ENCODE measurements at regions of chr17 and their contacts with region 1.

Region 1: DNA sequence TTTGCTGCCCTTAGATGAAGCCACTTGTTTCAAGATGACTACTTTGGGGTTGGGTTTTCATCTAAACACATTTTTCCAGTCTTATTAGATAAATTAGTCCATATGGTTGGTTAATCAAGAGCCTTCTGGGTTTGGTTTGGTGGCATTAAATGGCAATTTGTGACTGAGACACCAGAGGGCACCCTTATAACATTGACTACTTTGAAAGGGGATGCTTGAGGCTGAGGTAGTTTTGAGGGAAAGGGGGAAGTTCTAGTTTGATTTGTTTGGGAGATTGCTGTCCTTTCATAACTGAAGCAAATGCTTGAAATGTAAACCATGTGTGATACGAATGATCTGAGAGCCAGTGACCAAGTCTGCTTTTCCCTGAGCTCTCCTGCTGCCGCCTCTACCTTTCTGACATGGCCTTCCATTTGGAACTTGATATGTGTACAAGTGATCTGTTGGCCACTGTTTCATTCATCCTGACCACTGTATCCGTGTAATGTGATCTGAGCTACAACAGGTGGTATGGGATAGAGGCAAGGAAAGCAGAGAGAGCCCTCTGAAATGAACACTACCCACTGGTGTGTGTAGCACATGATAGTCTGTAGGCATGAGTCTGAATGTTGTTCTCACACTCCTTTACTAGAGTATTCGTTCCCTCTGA is 5.8 kb upstream of the RARA start:
- DNase-seq: peak; percentile 82 to 88 (median 83)
- H3K4me3 ChIP-seq: no peak overlapping the region
- H3K27ac ChIP-seq: no peak overlapping the region
- H3K4me1 ChIP-seq: peaks cover 16 to 39% (median 26%) of the 10 kb centered on the region in 4 experiments
- H3K27me3 ChIP-seq: no peaks in the 10 kb centered on the region

Region 2: GRCh38 chr17:40268141-40268712 is 34.9 kb before region 1 on chr17:
- CTCF ChIA-PET with region 1: no interaction called
- POLR2A ChIA-PET with region 1: no interaction called
- DNase-seq: no peak
- H3K4me3 ChIP-seq: no peak overlapping the region
- H3K27ac ChIP-seq: no peak overlapping the region
- H3K4me1 ChIP-seq: no peaks in the 10 kb centered on the region
- H3K27me3 ChIP-seq: no peaks in the 10 kb centered on the region

Region 3: DNA sequence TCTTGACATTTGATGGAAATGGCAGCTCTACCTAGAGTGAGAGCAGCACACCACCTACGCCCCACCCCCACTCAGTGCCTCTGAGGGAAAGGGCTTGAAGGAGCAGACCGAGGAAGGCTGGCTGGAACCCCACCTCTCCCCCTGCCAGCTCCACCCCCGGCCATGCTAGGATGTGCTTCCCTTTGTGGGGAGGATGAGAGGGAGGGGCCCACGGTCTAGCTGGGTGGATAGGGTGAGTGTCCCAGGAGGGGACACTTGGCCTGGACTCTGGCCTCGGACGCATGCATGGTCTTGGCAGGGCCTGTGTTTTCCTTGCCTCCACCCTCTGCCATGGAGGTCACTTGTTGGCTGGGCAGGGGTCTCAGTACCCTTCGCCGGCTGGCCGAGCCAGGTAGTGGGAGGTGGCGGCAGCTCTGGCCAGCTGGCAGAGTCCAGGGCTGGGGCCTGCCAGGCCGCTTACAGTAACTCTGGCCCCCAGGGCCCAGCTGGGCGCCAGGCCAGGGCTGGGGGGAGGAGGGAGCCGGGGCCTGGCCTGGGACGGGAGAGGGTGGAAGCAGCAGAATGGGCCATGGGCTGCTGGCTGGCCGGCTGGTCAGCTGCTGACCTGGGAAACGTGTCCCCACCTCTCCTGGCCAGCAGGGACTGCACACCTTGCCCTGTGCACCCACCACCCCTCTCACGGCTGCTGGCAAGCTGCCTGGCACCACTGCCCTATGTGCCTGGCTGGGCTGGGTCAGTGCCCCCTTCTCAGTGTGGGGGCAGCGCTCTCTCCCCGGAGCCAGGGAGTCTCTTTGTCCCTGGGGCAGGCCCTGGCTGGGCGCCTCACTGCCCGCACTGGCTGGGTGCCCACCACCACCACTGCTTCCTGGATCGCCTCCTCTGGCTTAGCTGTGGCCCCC is 28.9 kb after region 1 on chr17:
- CTCF ChIA-PET with region 1: interaction called, 87 read pairs
- POLR2A ChIA-PET with region 1: interaction called, 3 read pairs
- DNase-seq: peak in 1 of 3 donors; percentile 30
- H3K4me3 ChIP-seq: peak overlapping the region in 3 of 7 experiments; percentile 19 to 39 (median 33)
- H3K27ac ChIP-seq: no peak overlapping the region
- H3K4me1 ChIP-seq: peaks cover 35 to 92% (median 77%) of the 10 kb centered on the region in 4 experiments
- H3K27me3 ChIP-seq: no peaks in the 10 kb centered on the region

Region 4: DNA sequence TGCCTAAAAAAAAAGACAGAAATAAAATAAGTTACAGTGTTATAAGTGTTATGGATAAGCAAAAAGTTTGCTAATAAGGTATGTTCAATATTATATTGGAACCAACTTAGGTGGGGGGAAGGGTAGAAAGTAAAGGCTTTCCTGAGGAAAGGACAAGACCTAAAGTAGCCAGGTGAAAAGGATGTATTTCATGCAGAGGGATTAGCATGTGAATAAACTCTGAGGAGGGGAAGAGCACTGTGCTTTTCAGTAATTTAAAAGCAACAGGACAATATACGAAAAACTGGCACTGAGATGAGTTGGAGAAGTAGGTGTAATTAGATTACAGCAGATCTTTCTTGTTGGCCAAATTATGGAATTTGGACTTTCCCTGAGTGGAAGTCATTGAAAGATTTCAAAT is 106.9 kb after region 1 on chr17:
- CTCF ChIA-PET with region 1: interaction called, 11 read pairs
- POLR2A ChIA-PET with region 1: no interaction called
- DNase-seq: no peak
- H3K4me3 ChIP-seq: no peak overlapping the region
- H3K27ac ChIP-seq: no peak overlapping the region
- H3K4me1 ChIP-seq: no peaks in the 10 kb centered on the region
- H3K27me3 ChIP-seq: no peaks in the 10 kb centered on the region

Region 5: GRCh38 chr17:40622509-40622928 is 319.4 kb after region 1 on chr17:
- CTCF ChIA-PET with region 1: no interaction called
- POLR2A ChIA-PET with region 1: no interaction called
- DNase-seq: peak; percentile 61 to 93 (median 91)
- H3K4me3 ChIP-seq: peak overlapping the region in 1 of 7 experiments; percentile 4
- H3K27ac ChIP-seq: no peak overlapping the region
- H3K4me1 ChIP-seq: peaks cover 12 to 22% (median 14%) of the 10 kb centered on the region in 4 experiments
- H3K27me3 ChIP-seq: peaks cover 0 to 7% (median 3%) of the 10 kb centered on the region in 5 experiments